Panc1 (cell line): ENCODE measurements at regions of chr1 and their contacts with region 1.

Region 1: DNA sequence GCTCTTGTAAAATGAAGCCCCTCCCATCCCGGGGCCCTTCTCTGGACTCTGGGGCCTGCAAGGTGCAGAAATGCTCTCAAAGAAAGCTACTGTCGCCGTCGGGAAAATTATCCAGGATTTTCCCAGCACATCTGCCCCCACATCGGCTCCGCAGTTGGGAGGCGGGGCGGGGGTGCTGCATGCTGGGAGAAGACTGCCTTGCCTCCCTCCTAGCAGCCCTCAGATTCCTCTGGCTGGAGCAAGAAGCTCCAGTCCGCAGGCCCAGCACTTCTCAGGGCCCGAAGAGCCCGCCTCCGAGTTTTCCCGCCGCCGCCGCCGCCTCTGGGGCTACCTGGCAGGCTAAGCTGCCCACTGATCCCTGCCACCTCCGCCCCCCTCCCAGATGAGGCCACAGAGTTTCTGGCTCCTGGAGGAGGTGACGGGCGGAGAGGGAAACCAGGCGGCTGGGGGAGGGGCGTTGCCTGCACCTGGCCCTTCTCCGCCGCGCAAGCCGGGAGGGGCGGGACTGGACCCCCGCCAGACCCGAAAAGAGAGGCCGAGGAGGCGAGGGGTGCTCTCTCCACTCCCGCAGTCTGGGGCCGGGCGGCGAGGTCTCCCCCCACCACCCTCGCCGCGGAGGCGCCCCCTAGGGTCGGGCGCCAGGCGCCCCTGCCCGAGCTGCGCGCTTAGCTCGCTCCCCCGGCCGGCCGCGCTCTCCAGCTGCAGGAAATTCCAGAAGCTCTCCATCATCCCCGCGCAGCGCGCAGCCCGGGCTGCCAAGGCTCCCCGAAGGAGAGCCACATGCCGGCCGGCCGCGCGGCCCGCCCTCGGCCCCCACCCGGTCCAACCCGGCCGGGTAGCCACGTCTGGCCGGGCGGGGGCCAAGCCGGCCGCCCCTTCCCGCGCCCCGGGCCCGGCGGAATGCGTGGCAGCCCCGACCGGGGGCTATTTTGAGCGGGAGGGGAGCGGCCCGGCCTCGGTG is 28.8 kb downstream of the AHDC1 start:
- DNase-seq: no peak
- ATAC-seq: peak; percentile 62
- H3K4me3 ChIP-seq: peak overlapping the region; percentile 36 to 56
- H3K27ac ChIP-seq: peak overlapping the region; percentile 91
- H3K4me1 ChIP-seq: peaks cover 67% of the 10 kb centered on the region
- H3K27me3 ChIP-seq: no peaks in the 10 kb centered on the region
- CTCF ChIP-seq: peak; percentile 79

Region 2: GRCh38 chr1:27257155-27257554 is 318.0 kb before region 1 on chr1:
- CTCF ChIA-PET with region 1: no interaction called
- POLR2A ChIA-PET with region 1: no interaction called
- in situ Hi-C with region 1: no loop called
- intact Hi-C with region 1: no loop called
- DNase-seq: no peak
- ATAC-seq: no peak
- H3K4me3 ChIP-seq: no peak overlapping the region
- H3K27ac ChIP-seq: no peak overlapping the region
- H3K4me1 ChIP-seq: no peaks in the 10 kb centered on the region
- H3K27me3 ChIP-seq: no peaks in the 10 kb centered on the region
- CTCF ChIP-seq: no peak

Region 3: GRCh38 chr1:27562534-27563340 is 12.4 kb before region 1 on chr1:
- CTCF ChIA-PET with region 1: interaction called, 46 read pairs
- POLR2A ChIA-PET with region 1: interaction called, 4 read pairs
- in situ Hi-C with region 1: no loop called
- intact Hi-C with region 1: no loop called
- DNase-seq: no peak
- ATAC-seq: no peak
- H3K4me3 ChIP-seq: no peak overlapping the region
- H3K27ac ChIP-seq: peak overlapping the region; percentile 57
- H3K4me1 ChIP-seq: peaks cover 81% of the 10 kb centered on the region
- H3K27me3 ChIP-seq: no peaks in the 10 kb centered on the region
- CTCF ChIP-seq: no peak

Region 4: DNA sequence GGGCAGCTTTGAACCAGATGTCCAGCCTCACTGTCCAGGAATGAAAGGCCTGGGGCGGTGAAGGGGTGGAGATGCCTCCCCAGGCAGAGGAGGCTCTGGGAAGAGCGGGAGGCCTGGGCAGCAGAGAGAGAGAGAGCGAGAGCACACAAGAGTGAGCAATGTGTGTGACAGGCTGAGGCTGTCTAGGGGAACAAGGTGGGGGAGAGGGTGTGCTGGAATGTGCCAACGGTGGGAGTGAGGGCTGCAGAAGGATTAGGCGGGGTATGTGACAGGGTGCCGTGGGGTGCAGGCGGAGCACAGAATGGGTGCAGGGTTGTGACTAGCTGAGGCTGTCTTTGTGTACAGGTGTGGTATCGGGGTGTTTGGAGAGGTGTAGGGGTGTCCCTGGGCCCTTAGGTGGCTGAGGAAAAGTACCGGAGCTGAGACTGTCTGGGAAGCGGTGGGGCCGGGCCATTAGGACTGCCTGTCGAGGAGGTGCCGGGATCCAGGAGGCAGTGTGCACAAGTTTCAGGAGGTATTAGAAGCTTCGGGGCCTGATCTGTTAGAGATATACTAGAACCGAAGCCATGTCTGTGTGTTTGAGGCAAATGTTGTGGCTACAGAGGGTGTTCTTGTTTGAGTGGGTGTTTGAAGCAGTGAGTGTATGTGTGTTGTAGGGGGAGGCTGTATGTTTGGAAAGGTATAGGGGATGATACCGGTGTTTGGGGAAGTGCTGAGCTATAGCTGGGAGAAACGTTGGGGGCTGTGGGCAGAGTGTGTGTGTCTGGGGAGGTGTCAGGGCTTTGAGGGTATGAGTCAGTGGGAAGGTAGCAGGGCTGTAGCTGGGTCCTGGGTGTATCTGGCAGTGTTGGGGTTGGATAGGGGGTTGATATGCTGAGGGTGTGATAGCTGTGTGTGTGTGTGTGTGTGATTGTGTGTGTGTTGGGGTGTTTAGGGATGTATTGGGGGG is 19.7 kb after region 1 on chr1:
- CTCF ChIA-PET with region 1: interaction called, 12 read pairs
- POLR2A ChIA-PET with region 1: interaction called, 4 read pairs
- in situ Hi-C with region 1: no loop called
- intact Hi-C with region 1: no loop called
- DNase-seq: no peak
- ATAC-seq: peak; percentile 5; the same call in 1 of the 2 replicates
- H3K4me3 ChIP-seq: no peak overlapping the region
- H3K27ac ChIP-seq: peak overlapping the region; percentile 18
- H3K4me1 ChIP-seq: peaks cover 89% of the 10 kb centered on the region
- H3K27me3 ChIP-seq: no peaks in the 10 kb centered on the region
- CTCF ChIP-seq: no peak